Transverse colon (tissue), 4 donors: ENCODE measurements at regions of chr11 and their contacts with region 1.

Region 1: GRCh38 chr11:13193613-13194012 is 84.0 kb upstream of the BMAL1 start:
- DNase-seq: no peak
- H3K4me3 ChIP-seq: no peak overlapping the region
- H3K27ac ChIP-seq: no peak overlapping the region
- H3K4me1 ChIP-seq: no peaks in the 10 kb centered on the region
- H3K27me3 ChIP-seq: no peaks in the 10 kb centered on the region
- CTCF ChIP-seq: no peak
- EP300 ChIP-seq: no peak
- POLR2A ChIP-seq: no peak

Region 2: DNA sequence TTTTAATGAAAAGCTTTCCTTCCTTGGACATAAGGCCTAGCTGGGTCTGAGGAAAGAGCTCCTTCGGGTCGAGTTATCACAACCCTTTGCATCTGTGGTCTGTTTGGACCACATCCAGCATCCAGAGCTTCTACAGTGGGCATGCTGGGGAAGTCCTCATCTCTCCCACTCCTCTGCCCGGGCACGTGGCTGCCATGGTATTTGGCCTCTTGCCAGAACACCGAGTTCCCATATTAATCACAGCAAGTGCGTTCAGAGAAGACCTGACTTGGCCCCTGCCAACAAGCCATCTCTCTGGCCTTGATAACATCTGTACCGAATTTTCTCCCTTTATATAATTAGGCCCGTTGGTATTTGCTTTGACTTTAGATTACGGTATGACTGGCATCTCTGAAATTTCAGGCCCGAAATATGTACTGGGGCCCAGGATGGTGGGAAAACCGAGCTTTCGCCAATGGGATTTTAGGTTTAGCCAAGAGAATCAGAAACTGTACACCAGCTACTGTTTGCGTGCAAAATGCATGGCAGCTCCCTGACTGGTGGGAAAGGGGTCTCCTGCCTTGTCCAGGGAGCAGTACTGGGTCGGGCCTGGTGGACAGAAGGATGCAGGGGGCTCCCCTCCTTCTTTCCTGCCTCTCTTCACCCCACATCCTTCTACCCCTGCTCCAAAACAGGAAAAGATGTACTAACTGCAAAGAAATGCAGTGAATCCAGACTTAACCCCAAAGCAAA is 993.2 kb before region 1 on chr11:
- in situ Hi-C with region 1: no loop called
- intact Hi-C with region 1: no loop called
- DNase-seq: peak; percentile 30
- H3K4me3 ChIP-seq: no peak overlapping the region
- H3K27ac ChIP-seq: peak overlapping the region; percentile 36 to 72 (median 56)
- H3K4me1 ChIP-seq: peaks cover 9 to 22% (median 15%) of the 10 kb centered on the region in 4 donors
- H3K27me3 ChIP-seq: no peaks in the 10 kb centered on the region
- CTCF ChIP-seq: no peak
- EP300 ChIP-seq: peak; percentile 34
- POLR2A ChIP-seq: no peak

Region 3: GRCh38 chr11:13163158-13163557 is 30.5 kb before region 1 on chr11:
- in situ Hi-C with region 1: no loop called
- intact Hi-C with region 1: loop called (anchors 2 kb)
- DNase-seq: no peak
- H3K4me3 ChIP-seq: no peak overlapping the region
- H3K27ac ChIP-seq: no peak overlapping the region
- H3K4me1 ChIP-seq: no peaks in the 10 kb centered on the region
- H3K27me3 ChIP-seq: no peaks in the 10 kb centered on the region
- CTCF ChIP-seq: no peak
- EP300 ChIP-seq: no peak
- POLR2A ChIP-seq: no peak